ENCODE measurements at regions of chr2 and their contacts with region 1.

Region 1: GRCh38 chr2:88739985-88740600 is 48.6 kb downstream of the RPIA start:
- DNase-seq: peak; percentile 92
- H3K4me3 Mint-ChIP-seq: no peak overlapping the region
- H3K27ac Mint-ChIP-seq: no peak overlapping the region
- H3K4me1 Mint-ChIP-seq: peaks cover 12% of the 10 kb centered on the region
- H3K27me3 Mint-ChIP-seq: no peaks in the 10 kb centered on the region

Region 2: GRCh38 chr2:88765154-88765900 is 25.2 kb after region 1 on chr2:
- intact Hi-C with region 1: no loop called
- DNase-seq: peak; percentile 85
- H3K4me3 Mint-ChIP-seq: peak overlapping the region; percentile 83
- H3K27ac Mint-ChIP-seq: peak overlapping the region; percentile 39
- H3K4me1 Mint-ChIP-seq: peaks cover 5% of the 10 kb centered on the region
- H3K27me3 Mint-ChIP-seq: peaks cover 31% of the 10 kb centered on the region

Region 3: GRCh38 chr2:88880441-88880953 is 140.4 kb after region 1 on chr2:
- intact Hi-C with region 1: loop called (anchors 5 kb)
- DNase-seq: peak; percentile 81
- H3K4me3 Mint-ChIP-seq: no peak overlapping the region
- H3K27ac Mint-ChIP-seq: no peak overlapping the region
- H3K4me1 Mint-ChIP-seq: no peaks in the 10 kb centered on the region
- H3K27me3 Mint-ChIP-seq: peaks cover 23% of the 10 kb centered on the region

Measured in activated CD4-positive, alpha-beta T cell treated with anti-CD3 and anti-CD28 coated beads, Interleukin-2, amount 10 ng/mL, durations not matched to agents 24 days and 14 days (primary cell).